Left cardiac atrium (tissue), 4 donors: ENCODE measurements at regions of chr3 and their contacts with region 1.

Region 1: DNA sequence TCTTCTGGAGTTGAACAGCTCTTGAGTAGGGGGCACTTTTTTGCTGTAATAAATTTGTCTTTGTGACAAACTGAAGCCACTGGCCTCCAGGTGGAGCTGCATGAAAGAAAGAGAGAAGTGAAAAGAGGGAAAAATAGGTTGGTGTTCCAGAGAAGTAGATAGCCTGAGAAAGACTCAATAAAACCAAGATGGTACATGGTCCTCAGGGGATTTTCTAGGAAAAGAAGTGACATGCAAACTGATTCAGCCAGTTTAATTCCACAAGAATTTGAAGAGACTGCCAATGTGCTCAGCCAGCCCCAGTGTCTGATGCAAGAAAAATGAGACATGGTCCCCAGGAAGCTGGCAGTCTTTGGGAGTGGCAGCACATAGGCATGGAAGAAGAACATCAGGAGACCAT is 152.7 kb downstream of the CD47 start:
- DNase-seq: no peak
- ATAC-seq: peak; percentile 18 to 53

Region 2: GRCh38 chr3:108221911-108222852 is 284.0 kb after region 1 on chr3 and contains the start of gene IFT57:
- intact Hi-C with region 1: loop called in 1 of 2 experiments (anchors 10 kb)
- DNase-seq: peak; percentile 97
- ATAC-seq: peak; percentile 99 to 100
- total RNA-seq, gene IFT57: 20.9 to 30.3 TPM

Region 3: GRCh38 chr3:108406661-108407206 is 468.6 kb after region 1 on chr3:
- intact Hi-C with region 1: loop called in 1 of 2 experiments (anchors 5 kb)
- DNase-seq: no peak
- ATAC-seq: peak; percentile 67 to 85